Heart right ventricle (tissue), 16 donors: ENCODE measurements at regions of chr9 and their contacts with region 1.

Region 1: DNA sequence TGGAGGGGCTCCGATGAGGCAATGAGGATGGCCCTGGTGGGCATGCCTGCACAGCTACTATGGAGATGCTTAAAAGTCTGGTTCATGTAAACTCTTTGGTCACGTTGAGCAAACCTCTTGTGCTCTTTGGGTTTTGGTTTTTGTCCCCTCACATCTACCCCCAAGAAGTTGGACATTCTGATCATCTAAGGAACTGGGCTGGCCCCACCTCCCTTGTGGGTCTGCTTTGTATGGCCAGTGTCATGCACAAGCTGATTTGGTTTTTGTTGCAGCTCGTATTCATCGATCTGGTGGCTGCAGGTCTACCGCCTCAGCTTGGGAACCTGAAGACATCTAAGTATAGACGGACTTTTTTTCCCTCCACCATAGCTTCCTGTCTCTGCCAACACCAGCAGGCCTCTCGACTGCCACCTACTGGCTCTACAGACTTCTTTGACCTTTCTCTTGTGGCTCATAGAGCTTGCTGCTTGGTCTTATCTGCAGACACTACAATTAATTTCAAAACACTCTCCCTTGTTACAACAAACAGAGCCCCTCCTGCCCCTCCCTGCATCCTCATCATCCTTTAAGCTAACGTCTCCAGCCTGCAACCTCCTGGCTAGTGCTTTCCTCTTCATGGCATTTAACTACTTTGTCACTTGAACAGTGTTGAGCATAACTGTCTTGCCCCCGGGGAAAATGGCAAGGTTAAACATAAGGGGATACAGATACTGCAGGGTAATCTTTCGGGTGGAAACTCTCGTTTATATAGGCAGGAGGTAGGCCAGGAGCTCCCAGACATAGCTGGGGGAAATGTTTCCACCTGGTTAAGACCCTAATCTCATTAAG is 34.5 kb downstream of the TSTD2 start:
- DNase-seq: peak; percentile 45 to 84
- ATAC-seq: peak; percentile 61 to 78 (median 70)
- H3K4me3 ChIP-seq: no peak overlapping the region
- H3K27ac ChIP-seq: peak overlapping the region in 5 of 10 donors; percentile 2 to 63 (median 32)
- H3K4me1 ChIP-seq: peaks cover 4 to 82% (median 33%) of the 10 kb centered on the region in 9 donors
- H3K27me3 ChIP-seq: no peaks in the 10 kb centered on the region
- CTCF ChIP-seq: peak; percentile 78 to 93 (median 89)

Region 2: GRCh38 chr9:97468658-97469448 is 129.8 kb before region 1 on chr9:
- intact Hi-C with region 1: loop called in 8 of 10 experiments (anchors 5 kb)
- DNase-seq: peak; percentile 56 to 85
- ATAC-seq: peak; percentile 95 to 98 (median 98)
- H3K4me3 ChIP-seq: no peak overlapping the region
- H3K27ac ChIP-seq: peak overlapping the region in 9 of 10 donors; percentile 17 to 72 (median 53)
- H3K4me1 ChIP-seq: peaks cover 0 to 24% (median 7%) of the 10 kb centered on the region in 9 donors
- H3K27me3 ChIP-seq: no peaks in the 10 kb centered on the region
- CTCF ChIP-seq: peak; percentile 58 to 95 (median 83)

Region 3: DNA sequence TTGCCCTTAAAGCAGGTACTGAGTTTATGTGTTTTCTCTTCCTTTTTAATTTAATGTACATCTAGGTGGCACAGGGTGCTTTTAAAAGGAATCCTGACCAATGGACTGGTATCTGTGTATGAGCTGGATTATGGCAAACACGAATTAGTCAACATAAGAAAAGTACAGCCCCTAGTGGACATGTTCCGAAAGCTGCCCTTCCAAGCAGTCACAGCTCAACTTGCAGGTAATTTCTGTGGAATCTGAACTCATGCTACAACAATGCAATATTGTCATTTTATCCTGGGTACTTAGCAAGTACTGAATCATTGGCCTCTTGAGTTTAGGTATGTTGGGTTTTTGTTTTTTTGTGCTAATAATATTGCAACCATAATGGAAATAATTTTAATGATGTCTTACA is 111.6 kb before region 1 on chr9:
- intact Hi-C with region 1: loop called in 1 of 10 experiments (anchors 5 kb)
- DNase-seq: no peak
- ATAC-seq: no peak
- H3K4me3 ChIP-seq: no peak overlapping the region
- H3K27ac ChIP-seq: no peak overlapping the region
- H3K4me1 ChIP-seq: no peaks in the 10 kb centered on the region
- H3K27me3 ChIP-seq: no peaks in the 10 kb centered on the region
- CTCF ChIP-seq: peak in 7 of 9 donors; percentile 10 to 36 (median 23)

Region 4: DNA sequence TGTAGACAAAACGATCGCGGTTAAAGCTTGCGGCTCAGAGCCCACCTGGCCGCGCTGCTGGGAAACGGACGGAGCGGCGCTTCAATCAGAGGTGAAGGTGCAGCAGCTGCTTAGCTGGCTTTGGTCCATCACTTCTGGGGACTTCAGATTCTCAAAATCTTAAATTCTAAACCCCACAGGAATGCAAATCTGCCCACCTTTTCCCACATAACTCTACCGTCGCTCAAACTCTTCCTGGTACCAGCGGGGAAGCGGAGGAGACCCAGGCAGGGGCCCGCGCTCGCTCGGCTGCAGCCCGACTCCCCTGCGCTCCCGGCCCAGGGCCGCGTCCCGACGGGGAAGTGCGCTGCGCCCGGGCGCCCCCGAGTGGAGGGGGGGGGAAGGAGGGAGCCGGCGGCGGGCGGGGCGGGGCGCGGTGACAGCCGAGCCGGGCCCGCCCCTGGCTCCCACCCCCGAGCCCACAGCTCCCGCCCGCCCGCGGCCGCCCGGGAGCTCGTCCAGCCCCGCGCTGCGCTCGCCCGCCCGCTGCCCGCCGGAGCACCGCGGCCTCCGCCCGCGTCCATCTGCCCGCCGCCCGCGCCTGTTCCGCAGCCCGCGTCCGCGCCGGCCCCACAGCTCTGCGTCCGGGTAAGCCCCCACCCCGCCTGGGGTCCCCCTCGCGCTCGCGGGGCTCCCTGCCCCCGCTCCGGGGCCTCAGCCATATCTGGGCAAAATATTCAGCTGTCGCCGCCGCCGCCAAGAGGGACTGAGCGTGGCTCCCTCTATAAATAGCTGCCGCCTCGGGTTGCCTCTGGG is 97.3 kb before region 1 on chr9 and contains the start of gene TMOD1:
- intact Hi-C with region 1: loop called in 7 of 10 experiments (anchors 1 to 10 kb)
- DNase-seq: peak; percentile 71 to 88
- ATAC-seq: peak; percentile 59 to 90 (median 70)
- H3K4me3 ChIP-seq: peak within 1 kb of the TSS; percentile 62 to 99 (median 84)
- H3K27ac ChIP-seq: peak within 1 kb of the TSS; percentile 83 to 98 (median 93)
- H3K4me1 ChIP-seq: peaks cover 9 to 58% (median 38%) of the 10 kb centered on the region in 9 donors
- H3K27me3 ChIP-seq: peaks cover 0 to 61% (median 8%) of the 10 kb centered on the region in 7 donors
- CTCF ChIP-seq: peak in 4 of 9 donors; percentile 7 to 44 (median 37)
- total RNA-seq, gene TMOD1: 164 to 203 (median 181) TPM

Region 5: DNA sequence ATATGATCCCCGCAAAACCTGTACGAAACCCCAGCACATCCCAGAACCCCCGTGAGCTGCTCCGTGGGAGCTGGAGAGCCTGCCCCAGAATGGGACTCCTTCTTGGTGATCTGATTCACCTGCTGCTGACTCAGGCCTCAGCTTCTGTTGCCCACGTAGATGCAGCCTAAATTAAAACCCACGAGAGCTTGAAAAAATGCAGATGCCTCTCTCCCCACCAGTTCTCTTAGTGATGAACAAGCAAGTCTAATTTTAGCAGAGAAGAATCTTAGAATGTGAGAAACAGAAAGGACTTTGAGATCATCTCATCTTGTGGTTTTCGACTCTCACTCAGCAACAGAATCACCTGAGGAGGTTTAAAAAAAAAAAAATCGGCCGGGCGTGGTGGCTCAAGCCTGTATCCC is 39.6 kb before region 1 on chr9:
- intact Hi-C with region 1: loop called in 4 of 10 experiments (anchors 5 kb)
- DNase-seq: no peak
- ATAC-seq: no peak
- H3K4me3 ChIP-seq: no peak overlapping the region
- H3K27ac ChIP-seq: peak overlapping the region; percentile 26 to 90 (median 83)
- H3K4me1 ChIP-seq: peaks cover 21 to 82% (median 70%) of the 10 kb centered on the region in 9 donors
- H3K27me3 ChIP-seq: no peaks in the 10 kb centered on the region
- CTCF ChIP-seq: no peak

Region 6: DNA sequence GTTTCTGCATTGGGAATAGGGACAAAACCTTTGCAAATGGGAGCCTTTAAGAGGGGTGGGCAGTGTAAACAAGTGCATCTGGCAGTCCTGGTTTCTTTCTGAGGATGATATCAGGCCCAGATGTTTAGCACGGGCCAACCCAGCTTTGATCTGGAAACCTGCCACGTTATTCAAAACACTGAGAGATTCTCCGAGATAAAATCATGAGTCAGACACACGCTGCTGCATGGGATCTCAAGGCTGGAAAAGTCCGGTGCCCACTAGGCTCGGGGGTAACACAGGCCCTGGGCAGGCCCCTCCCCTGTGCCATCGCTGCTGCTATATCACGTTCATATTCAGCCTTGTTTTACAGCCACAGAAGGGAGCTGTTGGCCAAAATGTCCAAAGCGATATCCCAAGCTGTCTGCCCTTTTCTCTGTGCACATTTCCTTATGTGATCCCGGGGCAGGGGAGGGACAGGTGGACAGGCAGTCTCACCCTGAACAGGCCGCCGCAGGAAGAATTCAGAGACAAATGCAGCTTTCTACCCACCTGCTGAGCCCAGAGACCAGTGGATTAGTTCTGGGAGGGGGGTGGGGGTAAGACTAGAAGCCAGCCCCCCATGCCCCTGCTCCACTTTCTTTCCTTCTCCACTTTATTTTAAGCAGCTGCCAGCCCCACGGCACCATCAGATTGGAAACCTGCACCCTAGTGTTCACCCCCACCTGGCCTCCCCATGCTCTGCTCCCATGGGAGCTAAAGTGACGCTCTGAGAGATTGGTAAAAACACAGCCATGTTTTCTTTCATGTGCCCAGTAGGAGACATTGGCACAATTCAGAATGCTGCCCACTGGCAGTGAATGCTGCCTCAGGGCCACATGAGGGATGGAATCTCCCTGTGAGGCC is 34.1 kb before region 1 on chr9:
- intact Hi-C with region 1: loop called in 4 of 10 experiments (anchors 5 kb)
- DNase-seq: peak in 1 of 2 donors; percentile 33
- ATAC-seq: peak; percentile 19 to 74 (median 64)
- H3K4me3 ChIP-seq: no peak overlapping the region
- H3K27ac ChIP-seq: peak overlapping the region in 9 of 10 donors; percentile 18 to 65 (median 54)
- H3K4me1 ChIP-seq: peaks cover 5 to 45% (median 32%) of the 10 kb centered on the region in 9 donors
- H3K27me3 ChIP-seq: no peaks in the 10 kb centered on the region
- CTCF ChIP-seq: peak in 1 of 9 donors; percentile 3